Activated CD4-positive, alpha-beta T cell treated with anti-CD3 and anti-CD28 coated beads for 36 hours (primary cell): ENCODE measurements at regions of chr19 and their contacts with region 1.

Region 1: DNA sequence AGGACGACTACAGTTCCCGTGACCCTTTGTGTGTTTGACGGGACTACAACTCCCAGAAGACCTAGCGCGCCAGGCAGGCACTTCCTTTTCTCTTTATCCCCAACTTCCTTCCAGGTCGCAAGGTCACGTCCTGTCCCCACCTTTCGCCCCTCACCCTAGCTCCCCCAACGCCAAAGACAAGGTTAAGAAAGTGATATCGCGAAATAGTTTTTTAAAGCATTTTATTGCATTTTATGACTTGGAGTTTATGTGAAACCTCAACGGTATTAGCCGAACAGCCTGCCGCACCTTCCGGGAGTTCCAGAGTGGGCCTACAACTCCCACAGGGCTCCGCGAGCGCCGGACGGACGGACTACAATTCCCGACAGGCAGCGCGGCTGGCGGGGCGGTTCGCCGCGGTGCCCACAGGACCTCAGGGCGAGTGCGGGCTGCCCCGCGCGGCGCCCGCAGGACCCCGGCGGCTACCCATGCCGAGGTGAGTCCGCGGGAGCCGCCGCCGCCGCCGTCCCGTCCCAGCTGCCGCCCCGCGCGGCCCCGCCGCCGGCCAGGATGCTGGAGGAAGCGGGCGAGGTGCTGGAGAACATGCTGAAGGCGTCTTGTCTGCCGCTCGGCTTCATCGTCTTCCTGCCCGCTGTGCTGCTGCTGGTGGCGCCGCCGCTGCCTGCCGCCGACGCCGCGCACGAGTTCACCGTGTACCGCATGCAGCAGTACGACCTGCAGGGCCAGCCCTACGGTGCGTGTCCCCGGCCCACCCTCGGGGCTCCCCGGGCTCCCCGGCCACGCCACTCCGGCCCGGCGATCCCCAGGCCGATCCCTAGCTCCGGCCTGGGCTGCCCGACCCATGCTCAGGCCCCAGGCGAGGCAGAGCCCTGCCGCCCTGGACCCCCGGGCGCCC is at the start of gene NCLN:
- DNase-seq: peak; percentile 97
- ATAC-seq: peak; percentile 86
- H3K4me3 Mint-ChIP-seq: peak within 1 kb of the TSS; percentile 83
- H3K27ac Mint-ChIP-seq: peak within 1 kb of the TSS; percentile 94
- H3K4me1 Mint-ChIP-seq: peaks cover 56% of the 10 kb centered on the region
- H3K27me3 Mint-ChIP-seq: no peaks in the 10 kb centered on the region
- total RNA-seq, gene NCLN: 55.6 to 58.2 TPM

Region 2: DNA sequence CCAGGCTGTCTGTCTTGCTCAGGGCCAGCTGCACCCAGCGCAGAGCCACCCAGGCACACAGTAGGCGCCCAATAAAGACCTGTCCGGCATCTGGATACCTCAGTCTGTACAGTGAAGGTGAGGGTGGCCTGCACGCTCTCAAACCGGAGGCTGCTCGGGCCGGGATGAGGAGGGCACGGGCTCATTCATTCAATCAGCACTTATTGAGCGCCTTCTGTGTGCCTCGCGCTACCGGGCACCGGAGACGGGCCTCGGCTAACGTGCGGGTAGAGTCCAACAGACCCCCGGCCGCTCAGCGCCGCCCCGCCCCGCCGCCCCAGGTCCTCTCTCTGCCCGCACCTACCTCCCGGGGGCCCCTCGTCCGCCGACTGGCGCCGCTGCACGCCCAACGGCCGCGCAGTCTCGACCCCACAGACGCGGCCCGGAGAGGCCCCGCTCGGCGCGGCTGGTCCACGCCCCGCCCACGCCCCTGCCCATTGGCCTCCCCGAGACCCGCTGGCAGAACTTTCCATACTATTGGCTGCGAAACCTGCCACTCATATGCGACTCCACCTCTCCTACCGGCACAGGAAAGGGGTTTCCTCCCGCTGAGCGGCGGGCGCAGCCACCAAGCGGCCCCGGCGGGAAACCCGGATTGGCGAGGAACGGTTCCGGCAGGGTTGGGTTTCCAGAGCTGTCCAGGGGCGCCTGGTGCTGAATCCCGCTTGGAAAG is 446.0 kb before region 1 on chr19 and contains the start of gene SLC39A3:
- CTCF ChIA-PET with region 1: no interaction called
- POLR2A ChIA-PET with region 1: no interaction called
- intact Hi-C with region 1: loop called in 1 of 2 experiments (anchors 1 kb)
- DNase-seq: peak; percentile 99
- ATAC-seq: peak; percentile 100
- H3K4me3 Mint-ChIP-seq: peak within 1 kb of the TSS; percentile 95
- H3K27ac Mint-ChIP-seq: peak within 1 kb of the TSS; percentile 70
- H3K4me1 Mint-ChIP-seq: peaks cover 14% of the 10 kb centered on the region
- H3K27me3 Mint-ChIP-seq: peaks cover 8% of the 10 kb centered on the region
- total RNA-seq, gene SLC39A3: 26.6 to 46.0 TPM

Region 3: GRCh38 chr19:2933490-2933910 is 252.2 kb before region 1 on chr19:
- CTCF ChIA-PET with region 1: no interaction called
- POLR2A ChIA-PET with region 1: no interaction called
- intact Hi-C with region 1: no loop called
- DNase-seq: no peak
- ATAC-seq: no peak
- H3K4me3 Mint-ChIP-seq: no peak overlapping the region
- H3K27ac Mint-ChIP-seq: no peak overlapping the region
- H3K4me1 Mint-ChIP-seq: no peaks in the 10 kb centered on the region
- H3K27me3 Mint-ChIP-seq: no peaks in the 10 kb centered on the region

Region 4: GRCh38 chr19:2950286-2951124 is 235.2 kb before region 1 on chr19:
- CTCF ChIA-PET with region 1: interaction called, 5 read pairs
- POLR2A ChIA-PET with region 1: interaction called, 3 read pairs
- intact Hi-C with region 1: loop called (anchors 1 to 5 kb)
- DNase-seq: peak; percentile 100
- ATAC-seq: peak; percentile 99
- H3K4me3 Mint-ChIP-seq: peak overlapping the region; percentile 95
- H3K27ac Mint-ChIP-seq: peak overlapping the region; percentile 95
- H3K4me1 Mint-ChIP-seq: peaks cover 14% of the 10 kb centered on the region
- H3K27me3 Mint-ChIP-seq: no peaks in the 10 kb centered on the region

Region 5: GRCh38 chr19:3132971-3133792 is 52.5 kb before region 1 on chr19:
- CTCF ChIA-PET with region 1: interaction called, 3 read pairs
- POLR2A ChIA-PET with region 1: no interaction called
- intact Hi-C with region 1: loop called in 1 of 2 experiments (anchors 2 kb)
- DNase-seq: peak; percentile 96
- ATAC-seq: peak; percentile 98
- H3K4me3 Mint-ChIP-seq: peak overlapping the region; percentile 9
- H3K27ac Mint-ChIP-seq: peak overlapping the region; percentile 83
- H3K4me1 Mint-ChIP-seq: peaks cover 40% of the 10 kb centered on the region
- H3K27me3 Mint-ChIP-seq: peaks cover 3% of the 10 kb centered on the region

Region 6: GRCh38 chr19:3434712-3435553 is 249.2 kb after region 1 on chr19:
- CTCF ChIA-PET with region 1: no interaction called
- POLR2A ChIA-PET with region 1: no interaction called
- intact Hi-C with region 1: loop called in 1 of 2 experiments (anchors 1 kb)
- DNase-seq: peak; percentile 98
- ATAC-seq: peak; percentile 96
- H3K4me3 Mint-ChIP-seq: peak overlapping the region; percentile 84
- H3K27ac Mint-ChIP-seq: peak overlapping the region; percentile 99
- H3K4me1 Mint-ChIP-seq: peaks cover 13% of the 10 kb centered on the region
- H3K27me3 Mint-ChIP-seq: no peaks in the 10 kb centered on the region

Region 7: GRCh38 chr19:3762501-3763459 is 577.1 kb after region 1 on chr19 and contains the start of gene MRPL54:
- CTCF ChIA-PET with region 1: no interaction called
- POLR2A ChIA-PET with region 1: no interaction called
- intact Hi-C with region 1: loop called in 1 of 2 experiments (anchors 1 kb)
- DNase-seq: peak; percentile 100
- ATAC-seq: peak; percentile 88
- H3K4me3 Mint-ChIP-seq: peak within 1 kb of the TSS; percentile 100
- H3K27ac Mint-ChIP-seq: peak within 1 kb of the TSS; percentile 99
- H3K4me1 Mint-ChIP-seq: peaks cover 39% of the 10 kb centered on the region
- H3K27me3 Mint-ChIP-seq: no peaks in the 10 kb centered on the region
- total RNA-seq, gene MRPL54: 54.8 to 63.9 TPM